ENCODE measurements at regions of chr9 and their contacts with region 1.

Region 1: GRCh38 chr9:33415501-33416038 is 13.2 kb upstream of the AQP7 start:
- DNase-seq: peak; percentile 88
- ATAC-seq: peak; percentile 95
- H3K4me3 Mint-ChIP-seq: no peak overlapping the region
- H3K27ac Mint-ChIP-seq: no peak overlapping the region
- H3K4me1 Mint-ChIP-seq: peaks cover 7% of the 10 kb centered on the region
- H3K27me3 Mint-ChIP-seq: no peaks in the 10 kb centered on the region
- CTCF ChIP-seq: peak; percentile 51

Region 2: GRCh38 chr9:33381231-33381791 is 34.3 kb before region 1 on chr9:
- CTCF ChIA-PET with region 1: interaction called, 15 read pairs
- POLR2A ChIA-PET with region 1: no interaction called
- DNase-seq: peak; percentile 87
- ATAC-seq: peak; percentile 95
- H3K4me3 Mint-ChIP-seq: no peak overlapping the region
- H3K27ac Mint-ChIP-seq: peak overlapping the region; percentile 70; the same call in 1 of the 2 replicates
- H3K4me1 Mint-ChIP-seq: peaks cover 19% of the 10 kb centered on the region
- H3K27me3 Mint-ChIP-seq: no peaks in the 10 kb centered on the region
- CTCF ChIP-seq: no peak

Region 3: GRCh38 chr9:33436440-33436839 is 20.9 kb after region 1 on chr9:
- CTCF ChIA-PET with region 1: interaction called, 23 read pairs
- POLR2A ChIA-PET with region 1: no interaction called
- DNase-seq: no peak
- ATAC-seq: peak; percentile 19
- H3K4me3 Mint-ChIP-seq: no peak overlapping the region
- H3K27ac Mint-ChIP-seq: no peak overlapping the region
- H3K4me1 Mint-ChIP-seq: peaks cover 17% of the 10 kb centered on the region
- H3K27me3 Mint-ChIP-seq: no peaks in the 10 kb centered on the region
- CTCF ChIP-seq: no peak

Measured in WTC11 (cell line).